CD4-positive, alpha-beta memory T cell (primary cell): ENCODE measurements at regions of chr1 and their contacts with region 1.

Region 1: DNA sequence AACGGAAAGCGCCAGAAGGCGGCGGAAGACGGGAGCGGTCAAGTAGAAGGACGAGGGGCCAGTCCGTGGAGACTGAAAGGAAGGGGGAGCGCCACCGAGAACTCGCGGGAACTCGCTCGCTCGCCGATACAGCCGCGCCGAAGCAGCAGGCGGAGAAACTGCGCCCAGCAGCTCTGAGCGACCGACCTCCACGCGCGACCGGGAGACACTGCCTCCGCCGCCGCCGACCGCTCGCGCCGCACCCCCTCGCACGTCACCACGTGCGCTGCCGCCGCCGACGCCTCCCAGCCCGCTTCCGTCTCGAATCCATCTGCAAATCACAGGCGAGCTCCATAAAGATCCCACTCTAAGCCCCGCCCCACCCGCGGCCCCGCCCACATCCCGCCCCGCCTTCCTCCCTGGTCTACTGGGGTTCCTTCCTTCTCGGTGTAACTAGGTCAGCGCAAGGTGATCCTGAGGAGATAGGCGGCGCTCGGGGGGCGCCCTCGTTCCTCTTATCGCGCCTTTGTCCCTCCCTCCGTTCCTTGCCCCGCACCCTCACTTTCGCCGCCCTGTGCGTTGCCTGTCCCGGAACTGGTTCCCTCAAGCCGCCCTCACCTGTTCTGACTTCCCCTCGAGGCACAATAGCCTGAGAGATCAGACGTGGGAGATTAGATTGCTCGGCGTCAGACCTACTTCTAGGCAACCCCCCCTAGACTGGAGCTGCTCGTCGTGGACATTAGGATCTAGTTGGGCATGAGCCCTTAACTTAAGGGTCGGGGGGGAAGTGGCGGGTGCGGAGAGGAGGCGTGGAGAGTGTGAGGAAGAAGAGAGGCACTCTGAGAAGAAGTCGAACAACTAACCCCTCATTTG is at the start of gene IVNS1ABP:
- DNase-seq: peak; percentile 94 to 97 (median 96)
- H3K4me3 ChIP-seq: peak within 1 kb of the TSS; percentile 82 to 90
- H3K4me3 Mint-ChIP-seq: peak within 1 kb of the TSS; percentile 93 to 99 (median 97)
- H3K27ac ChIP-seq: peak within 1 kb of the TSS; percentile 99
- H3K27ac Mint-ChIP-seq: peak within 1 kb of the TSS; percentile 99 to 100 (median 99)
- H3K4me1 ChIP-seq: peaks cover 47% of the 10 kb centered on the region
- H3K4me1 Mint-ChIP-seq: peaks cover 29 to 58% (median 47%) of the 10 kb centered on the region in 4 donors
- H3K27me3 ChIP-seq: no peaks in the 10 kb centered on the region
- H3K27me3 Mint-ChIP-seq: no peaks in the 10 kb centered on the region
- total RNA-seq, gene IVNS1ABP: 179 to 187 TPM

Region 2: DNA sequence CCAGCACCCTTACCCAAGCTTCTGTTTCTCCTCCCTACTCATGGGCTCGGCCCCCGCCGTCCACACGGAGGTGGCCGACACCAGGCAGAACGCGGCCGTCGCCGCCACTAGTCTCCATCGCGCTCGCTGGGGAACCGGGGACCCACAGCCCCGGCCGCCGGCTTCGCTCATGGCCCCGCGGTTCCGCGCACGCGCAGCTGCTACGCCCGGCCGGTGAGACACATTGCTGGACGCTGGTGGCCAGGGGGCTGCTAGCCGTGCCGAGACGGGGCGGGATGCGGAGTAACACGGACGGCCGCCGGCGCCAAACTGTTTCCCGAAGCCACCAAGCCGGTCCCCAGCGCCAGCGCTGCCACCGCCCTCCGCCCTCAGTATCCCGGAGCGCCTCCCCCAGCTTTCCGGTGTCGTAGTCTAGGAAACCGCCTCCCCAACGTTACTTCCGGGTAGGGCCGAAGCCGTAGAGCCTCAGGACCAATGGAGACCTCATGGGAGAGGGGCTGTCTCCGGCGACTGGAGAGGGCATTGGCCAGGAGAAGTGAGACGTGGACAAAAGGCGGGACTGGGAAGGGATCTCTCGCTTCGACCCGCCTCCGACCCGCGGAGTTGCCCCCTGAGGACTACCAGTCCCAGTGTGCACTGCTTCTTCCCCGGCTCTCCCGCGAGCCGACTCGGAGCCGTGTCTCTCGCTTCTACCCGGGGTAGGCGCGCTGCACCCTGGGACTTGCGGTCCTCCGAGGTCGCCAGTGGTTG is 562.6 kb before region 1 on chr1 and contains the start of gene EDEM3:
- CTCF ChIA-PET with region 1: no interaction called
- POLR2A ChIA-PET with region 1: interaction called, 8 read pairs
- intact Hi-C with region 1: loop called (anchors 2 kb)
- DNase-seq: peak; percentile 97 to 100 (median 99)
- H3K4me3 ChIP-seq: peak within 1 kb of the TSS; percentile 73 to 96
- H3K4me3 Mint-ChIP-seq: peak within 1 kb of the TSS; percentile 90 to 98 (median 96)
- H3K27ac ChIP-seq: peak within 1 kb of the TSS; percentile 94
- H3K27ac Mint-ChIP-seq: peak within 1 kb of the TSS; percentile 82 to 98 (median 96)
- H3K4me1 ChIP-seq: peaks cover 32% of the 10 kb centered on the region
- H3K4me1 Mint-ChIP-seq: peaks cover 33 to 57% (median 44%) of the 10 kb centered on the region in 4 donors
- H3K27me3 ChIP-seq: no peaks in the 10 kb centered on the region
- H3K27me3 Mint-ChIP-seq: no peaks in the 10 kb centered on the region
- total RNA-seq, gene EDEM3: 58.6 to 61.7 TPM

Region 3: DNA sequence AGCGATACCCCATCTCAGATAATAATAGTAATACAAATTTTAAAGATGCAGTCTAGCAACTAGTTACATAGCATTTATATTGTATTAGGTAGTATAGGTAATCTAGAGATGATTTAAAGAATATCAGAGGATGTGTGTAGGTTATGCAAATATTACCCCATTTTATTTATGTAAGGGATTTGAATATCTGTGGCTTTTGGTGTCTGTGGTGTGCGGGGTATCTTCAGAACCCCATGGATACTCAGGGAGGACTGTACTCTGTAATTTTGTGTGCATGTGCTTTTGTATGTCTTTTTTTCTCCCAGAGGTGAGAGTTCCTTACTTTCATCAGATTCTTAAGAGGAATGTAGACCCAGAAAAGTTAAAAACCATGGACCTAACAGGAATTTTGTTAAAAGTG is 259.1 kb before region 1 on chr1:
- CTCF ChIA-PET with region 1: no interaction called
- POLR2A ChIA-PET with region 1: no interaction called
- intact Hi-C with region 1: no loop called
- DNase-seq: no peak
- H3K4me3 ChIP-seq: no peak overlapping the region
- H3K4me3 Mint-ChIP-seq: no peak overlapping the region
- H3K27ac ChIP-seq: no peak overlapping the region
- H3K27ac Mint-ChIP-seq: peak overlapping the region in 1 of 7 donors; percentile 66
- H3K4me1 ChIP-seq: peaks cover 16% of the 10 kb centered on the region
- H3K4me1 Mint-ChIP-seq: peaks cover 37 to 67% (median 49%) of the 10 kb centered on the region in 4 donors
- H3K27me3 ChIP-seq: no peaks in the 10 kb centered on the region
- H3K27me3 Mint-ChIP-seq: no peaks in the 10 kb centered on the region

Region 4: DNA sequence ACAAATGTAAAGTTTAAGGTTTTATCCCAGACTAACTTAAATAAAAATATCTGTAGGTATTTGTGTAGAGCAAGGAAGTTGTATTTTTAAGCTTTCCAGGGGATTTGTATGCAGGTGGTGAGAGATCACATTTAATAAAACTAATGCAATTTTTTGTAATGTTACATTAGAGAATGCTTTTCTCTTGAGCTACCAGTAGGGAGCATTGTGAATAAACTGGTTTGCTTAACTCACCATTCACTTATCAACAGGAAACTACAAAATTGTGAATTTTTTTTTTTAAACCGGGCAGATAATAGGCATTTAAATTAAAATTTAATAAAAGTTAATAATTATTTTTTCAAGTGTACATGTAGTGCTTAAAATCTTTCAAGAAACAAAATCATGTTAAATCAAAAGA is 78.8 kb before region 1 on chr1:
- CTCF ChIA-PET with region 1: interaction called, 42 read pairs
- POLR2A ChIA-PET with region 1: interaction called, 109 read pairs
- intact Hi-C with region 1: loop called (anchors 1 kb)
- DNase-seq: peak in 4 of 5 donors; percentile 29 to 44 (median 35)
- H3K4me3 ChIP-seq: no peak overlapping the region
- H3K4me3 Mint-ChIP-seq: peak overlapping the region in 4 of 8 donors; percentile 4 to 60 (median 32)
- H3K27ac ChIP-seq: no peak overlapping the region
- H3K27ac Mint-ChIP-seq: peak overlapping the region in 2 of 7 donors; percentile 23 to 70
- H3K4me1 ChIP-seq: peaks cover 25% of the 10 kb centered on the region
- H3K4me1 Mint-ChIP-seq: peaks cover 17 to 35% (median 27%) of the 10 kb centered on the region in 4 donors
- H3K27me3 ChIP-seq: no peaks in the 10 kb centered on the region
- H3K27me3 Mint-ChIP-seq: no peaks in the 10 kb centered on the region

Region 5: DNA sequence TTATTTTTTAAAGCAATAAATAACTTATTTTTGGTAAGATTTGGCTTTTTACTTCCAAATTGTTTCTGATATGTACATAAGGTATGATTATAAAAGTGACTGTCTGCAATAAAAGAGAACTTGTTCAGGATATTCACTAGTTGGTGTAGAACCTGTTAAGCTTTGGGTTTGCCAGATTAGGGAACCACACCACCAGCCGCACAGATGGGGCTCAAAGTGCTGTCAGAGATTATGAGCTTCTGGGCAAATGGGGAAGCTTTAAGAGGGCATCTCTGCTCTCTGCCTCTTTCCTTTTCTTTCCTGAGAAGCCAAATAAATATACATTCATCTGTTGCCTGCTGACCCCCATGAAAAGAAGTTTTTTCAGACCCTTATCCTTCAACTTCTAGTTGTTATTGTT is 25.6 kb before region 1 on chr1:
- CTCF ChIA-PET with region 1: interaction called, 3 read pairs
- POLR2A ChIA-PET with region 1: interaction called, 27 read pairs
- intact Hi-C with region 1: no loop called
- DNase-seq: no peak
- H3K4me3 ChIP-seq: no peak overlapping the region
- H3K4me3 Mint-ChIP-seq: no peak overlapping the region
- H3K27ac ChIP-seq: no peak overlapping the region
- H3K27ac Mint-ChIP-seq: peak overlapping the region in 4 of 7 donors; percentile 22 to 88 (median 70)
- H3K4me1 ChIP-seq: peaks cover 7% of the 10 kb centered on the region
- H3K4me1 Mint-ChIP-seq: peaks cover 7 to 32% (median 17%) of the 10 kb centered on the region in 4 donors
- H3K27me3 ChIP-seq: no peaks in the 10 kb centered on the region
- H3K27me3 Mint-ChIP-seq: no peaks in the 10 kb centered on the region

Region 6: GRCh38 chr1:185420588-185421081 is 103.4 kb after region 1 on chr1:
- CTCF ChIA-PET with region 1: no interaction called
- POLR2A ChIA-PET with region 1: interaction called, 8 read pairs
- intact Hi-C with region 1: loop called (anchors 5 kb)
- DNase-seq: peak; percentile 32 to 70 (median 42)
- H3K4me3 ChIP-seq: no peak overlapping the region
- H3K4me3 Mint-ChIP-seq: peak overlapping the region in 6 of 8 donors; percentile 14 to 44 (median 36)
- H3K27ac ChIP-seq: no peak overlapping the region
- H3K27ac Mint-ChIP-seq: peak overlapping the region in 5 of 7 donors; percentile 19 to 85 (median 81)
- H3K4me1 ChIP-seq: peaks cover 20% of the 10 kb centered on the region
- H3K4me1 Mint-ChIP-seq: peaks cover 10 to 19% (median 13%) of the 10 kb centered on the region in 4 donors
- H3K27me3 ChIP-seq: no peaks in the 10 kb centered on the region
- H3K27me3 Mint-ChIP-seq: no peaks in the 10 kb centered on the region

Region 7: GRCh38 chr1:185646202-185646683 is 329.0 kb after region 1 on chr1:
- CTCF ChIA-PET with region 1: interaction called, 5 read pairs
- POLR2A ChIA-PET with region 1: interaction called, 11 read pairs
- intact Hi-C with region 1: no loop called
- DNase-seq: no peak
- H3K4me3 ChIP-seq: no peak overlapping the region
- H3K4me3 Mint-ChIP-seq: peak overlapping the region in 1 of 8 donors; percentile 57
- H3K27ac ChIP-seq: no peak overlapping the region
- H3K27ac Mint-ChIP-seq: peak overlapping the region in 2 of 7 donors; percentile 36 to 90
- H3K4me1 ChIP-seq: peaks cover 23% of the 10 kb centered on the region
- H3K4me1 Mint-ChIP-seq: peaks cover 20 to 44% (median 24%) of the 10 kb centered on the region in 4 donors
- H3K27me3 ChIP-seq: no peaks in the 10 kb centered on the region
- H3K27me3 Mint-ChIP-seq: no peaks in the 10 kb centered on the region

Region 8: DNA sequence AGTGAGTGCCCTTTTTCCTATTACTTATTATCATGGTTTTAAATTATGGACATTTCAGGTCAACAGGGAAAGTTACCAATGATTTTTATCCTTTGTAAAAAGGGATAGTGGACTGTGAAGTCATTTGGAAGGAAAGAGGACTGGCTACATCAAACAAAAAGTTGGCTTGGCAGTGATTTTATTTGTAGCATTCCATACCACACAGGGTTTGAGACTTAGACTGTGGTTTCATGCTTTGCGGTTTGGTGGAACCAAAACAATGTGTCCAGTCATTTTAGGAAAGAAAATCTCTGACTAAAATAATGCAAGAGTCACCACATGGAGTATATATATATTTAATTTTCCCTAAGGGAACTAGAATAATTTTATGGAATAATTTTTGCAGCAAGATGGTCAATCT is 656.4 kb after region 1 on chr1:
- CTCF ChIA-PET with region 1: no interaction called
- POLR2A ChIA-PET with region 1: no interaction called
- intact Hi-C with region 1: no loop called
- DNase-seq: no peak
- H3K4me3 ChIP-seq: no peak overlapping the region
- H3K4me3 Mint-ChIP-seq: no peak overlapping the region
- H3K27ac ChIP-seq: no peak overlapping the region
- H3K27ac Mint-ChIP-seq: no peak overlapping the region
- H3K4me1 ChIP-seq: no peaks in the 10 kb centered on the region
- H3K4me1 Mint-ChIP-seq: no peaks in the 10 kb centered on the region
- H3K27me3 ChIP-seq: no peaks in the 10 kb centered on the region
- H3K27me3 Mint-ChIP-seq: peaks cover 2 to 3% of the 10 kb centered on the region in 2 donors